ENCODE measurements at regions of chr3 and their contacts with region 1.

Region 1: DNA sequence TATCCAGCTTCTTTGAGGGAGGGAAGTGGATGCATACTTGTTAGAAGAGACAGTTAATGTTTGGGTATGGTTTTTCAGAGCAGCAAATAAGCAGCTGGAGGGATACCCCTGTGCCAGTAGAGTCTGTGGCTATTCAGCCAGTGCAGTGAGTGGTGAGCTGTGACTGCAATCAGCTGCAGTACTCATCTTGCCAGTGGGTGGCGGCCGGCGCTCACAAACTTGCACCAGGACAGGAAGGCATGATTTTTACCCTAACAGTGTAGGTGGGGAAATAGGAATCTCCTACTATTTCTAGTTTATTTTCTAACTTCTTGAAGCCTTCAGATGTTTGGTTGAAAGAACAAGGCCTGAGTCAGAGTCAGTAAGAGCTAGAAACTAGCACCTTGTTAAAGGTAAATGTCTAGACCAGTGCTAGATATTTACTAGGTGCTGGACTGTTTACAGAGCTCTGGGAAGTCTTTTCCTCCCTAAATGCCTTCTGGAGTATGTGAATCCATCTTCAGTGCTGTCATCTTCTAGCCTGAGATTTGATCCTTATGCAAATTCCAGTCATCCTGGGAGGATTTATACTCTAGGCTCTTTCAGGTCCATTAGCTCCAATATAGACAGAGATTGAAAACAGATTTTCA is 23.6 kb downstream of the TIMP4 start:
- DNase-seq: peak; percentile 61 to 96
- H3K4me3 ChIP-seq: no peak overlapping the region
- CTCF ChIP-seq: peak in 1 of 3 donors; percentile 82
- POLR2A ChIP-seq: no peak

Region 2: DNA sequence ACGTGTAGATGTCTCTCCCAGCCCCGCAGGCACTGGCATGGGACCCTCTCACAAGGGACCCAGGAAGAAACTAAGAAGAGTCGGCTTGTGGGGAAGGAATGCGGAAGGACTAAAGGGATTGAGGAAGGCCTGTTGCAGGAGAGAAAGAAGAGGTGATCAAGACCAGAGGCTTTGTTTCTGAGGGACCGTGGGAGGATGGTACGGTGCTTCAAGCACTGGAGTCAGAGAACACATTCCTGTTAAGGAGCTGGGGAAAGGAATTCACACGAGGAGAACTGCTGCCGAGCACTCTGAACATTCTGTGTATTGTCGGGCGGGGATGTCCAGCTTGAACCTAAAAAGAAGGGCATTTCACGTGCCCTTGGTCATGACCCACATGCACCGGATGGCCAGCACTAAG is 379.9 kb before region 1 on chr3:
- intact Hi-C with region 1: no loop called
- DNase-seq: no peak
- H3K4me3 ChIP-seq: no peak overlapping the region
- CTCF ChIP-seq: no peak
- POLR2A ChIP-seq: no peak

Region 3: GRCh38 chr3:12175844-12176453 is 40.8 kb after region 1 on chr3:
- intact Hi-C with region 1: loop called (anchors 5 kb)
- DNase-seq: peak in 1 of 2 donors; percentile 55
- H3K4me3 ChIP-seq: no peak overlapping the region
- CTCF ChIP-seq: peak in 1 of 3 donors; percentile 50
- POLR2A ChIP-seq: no peak

Region 4: DNA sequence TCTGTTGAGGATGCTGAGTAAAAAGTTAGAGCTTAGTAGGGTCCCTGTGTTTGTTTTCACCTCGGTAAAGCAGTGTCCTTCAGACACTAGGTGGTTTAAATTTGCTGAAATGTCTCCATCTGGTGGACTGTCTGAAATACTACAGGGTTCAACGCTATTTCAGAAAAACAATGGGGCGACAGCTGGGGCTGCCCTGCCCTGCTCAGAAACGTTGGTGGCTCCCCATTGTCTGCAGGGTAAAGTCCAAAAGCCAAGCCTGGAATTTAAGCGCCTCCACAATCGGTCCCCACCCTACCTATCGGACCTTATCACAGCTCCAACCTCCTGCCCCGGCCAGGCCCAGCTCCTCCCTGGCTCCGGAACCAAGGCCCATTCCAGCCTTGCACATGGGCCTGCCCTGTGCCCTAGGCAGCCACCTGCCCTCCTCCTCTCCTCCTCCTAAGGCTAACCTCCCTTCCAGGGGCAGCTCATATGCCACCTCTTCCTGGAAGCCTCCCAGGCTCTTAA is 344.8 kb after region 1 on chr3:
- intact Hi-C with region 1: loop called (anchors 5 kb)
- DNase-seq: no peak
- H3K4me3 ChIP-seq: no peak overlapping the region
- CTCF ChIP-seq: peak in 1 of 3 donors; percentile 78
- POLR2A ChIP-seq: no peak

Region 5: GRCh38 chr3:12518261-12519028 is 383.3 kb after region 1 on chr3:
- intact Hi-C with region 1: no loop called
- DNase-seq: no peak
- H3K4me3 ChIP-seq: no peak overlapping the region
- CTCF ChIP-seq: no peak
- POLR2A ChIP-seq: no peak

Measured in lower leg skin (tissue), 4 donors.